Heart right ventricle (tissue), 16 donors: ENCODE measurements at regions of chr1 and their contacts with region 1.

Region 1: DNA sequence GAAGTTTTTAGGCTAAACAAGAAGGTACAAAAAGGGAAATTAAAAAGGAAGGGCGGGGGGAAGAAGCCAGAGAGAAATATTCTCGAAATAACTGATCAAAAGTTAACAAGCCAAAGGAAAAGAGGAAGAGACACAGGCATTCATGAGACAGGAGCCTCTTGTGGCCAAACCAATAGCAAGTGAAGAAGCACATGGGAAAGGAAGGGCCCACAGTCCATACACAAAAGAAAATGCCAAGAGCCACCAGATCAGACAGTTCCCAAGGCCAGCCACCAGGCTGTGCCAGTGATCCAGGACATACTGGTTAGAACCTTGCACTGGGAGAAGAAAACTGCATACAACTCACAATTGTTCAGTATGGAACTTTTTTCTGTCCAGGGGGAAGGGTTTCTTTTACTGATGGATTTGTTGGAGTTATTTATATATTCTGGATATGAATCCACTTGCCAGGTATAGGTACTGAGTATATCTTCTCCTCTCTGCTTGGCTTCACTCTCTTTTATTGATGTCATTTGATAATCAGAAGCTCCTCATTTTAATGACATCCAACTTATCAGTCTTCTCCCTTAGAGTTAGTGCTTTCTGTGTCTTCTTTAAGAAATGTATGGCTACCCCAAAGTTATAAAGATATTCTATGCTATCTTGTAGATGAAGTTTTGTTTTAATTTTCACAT is 76.8 kb downstream of the CD46 start:
- DNase-seq: peak; percentile 73 to 84
- ATAC-seq: peak; percentile 31 to 65 (median 56)
- H3K4me3 ChIP-seq: no peak overlapping the region
- H3K27ac ChIP-seq: peak overlapping the region; percentile 10 to 100 (median 94)
- H3K4me1 ChIP-seq: peaks cover 38 to 98% (median 89%) of the 10 kb centered on the region in 9 donors
- H3K27me3 ChIP-seq: no peaks in the 10 kb centered on the region
- CTCF ChIP-seq: peak; percentile 82 to 96 (median 90)

Region 2: DNA sequence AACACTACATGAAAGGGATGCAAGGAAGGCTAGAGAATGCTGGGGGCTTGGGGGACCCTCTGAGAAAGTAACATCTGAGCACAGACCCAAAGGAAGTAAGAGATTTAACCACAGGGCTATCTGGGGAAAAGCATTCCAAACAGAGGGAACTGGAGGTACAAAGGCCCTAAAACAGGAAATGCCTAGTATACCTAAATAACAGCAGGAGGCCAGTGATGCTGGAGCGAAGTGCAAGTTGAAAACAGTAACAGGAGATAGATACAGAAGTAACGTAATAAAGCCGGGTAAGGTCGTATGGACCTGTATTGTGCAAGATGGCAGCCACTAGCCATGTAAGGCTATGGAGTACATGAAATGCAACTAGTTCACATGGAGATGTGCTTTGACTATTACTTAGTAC is 30.2 kb after region 1 on chr1:
- intact Hi-C with region 1: no loop called
- DNase-seq: no peak
- ATAC-seq: no peak
- H3K4me3 ChIP-seq: no peak overlapping the region
- H3K27ac ChIP-seq: peak overlapping the region in 2 of 10 donors; percentile 2 to 13
- H3K4me1 ChIP-seq: peaks cover 3 to 85% (median 67%) of the 10 kb centered on the region in 9 donors
- H3K27me3 ChIP-seq: no peaks in the 10 kb centered on the region
- CTCF ChIP-seq: no peak

Region 3: GRCh38 chr1:207868774-207869721 is 40.4 kb after region 1 on chr1:
- intact Hi-C with region 1: loop called (anchors 1 to 5 kb)
- DNase-seq: peak; percentile 82 to 87
- ATAC-seq: peak; percentile 18 to 80 (median 66)
- H3K4me3 ChIP-seq: peak overlapping the region; percentile 76 to 97 (median 84)
- H3K27ac ChIP-seq: peak overlapping the region; percentile 93 to 99 (median 96)
- H3K4me1 ChIP-seq: peaks cover 18 to 73% (median 61%) of the 10 kb centered on the region in 9 donors
- H3K27me3 ChIP-seq: no peaks in the 10 kb centered on the region
- CTCF ChIP-seq: peak; percentile 68 to 97 (median 79)

Region 4: DNA sequence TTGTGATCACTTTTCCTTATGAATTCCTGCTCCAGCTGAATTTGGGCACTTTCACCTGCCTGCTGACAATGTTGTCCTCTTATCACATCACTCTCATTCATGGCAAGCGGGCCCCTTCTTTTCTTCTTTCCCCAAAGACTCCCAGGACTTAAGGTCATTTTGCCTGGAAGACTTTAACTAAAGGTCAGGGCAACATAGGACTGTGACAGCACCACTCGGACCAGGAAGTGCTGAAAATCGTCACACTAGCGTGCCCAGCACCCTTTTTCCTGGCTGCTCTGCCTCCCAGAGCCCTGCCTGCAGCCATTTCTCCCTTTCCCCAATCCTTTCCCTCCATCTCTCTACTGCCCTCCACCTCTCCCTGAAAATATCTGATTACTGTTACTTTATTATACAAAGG is 46.9 kb after region 1 on chr1:
- intact Hi-C with region 1: loop called in 1 of 10 experiments (anchors 2 kb)
- DNase-seq: no peak
- ATAC-seq: no peak
- H3K4me3 ChIP-seq: no peak overlapping the region
- H3K27ac ChIP-seq: peak overlapping the region in 1 of 10 donors; percentile 11
- H3K4me1 ChIP-seq: peaks cover 0 to 28% (median 14%) of the 10 kb centered on the region in 9 donors
- H3K27me3 ChIP-seq: no peaks in the 10 kb centered on the region
- CTCF ChIP-seq: no peak

Region 5: GRCh38 chr1:207997486-207998268 is 169.1 kb after region 1 on chr1:
- intact Hi-C with region 1: loop called in 1 of 10 experiments (anchors 5 kb)
- DNase-seq: peak; percentile 64 to 88
- ATAC-seq: peak; percentile 82 to 91 (median 85)
- H3K4me3 ChIP-seq: no peak overlapping the region
- H3K27ac ChIP-seq: no peak overlapping the region
- H3K4me1 ChIP-seq: peaks cover 0 to 8% (median 4%) of the 10 kb centered on the region in 9 donors
- H3K27me3 ChIP-seq: no peaks in the 10 kb centered on the region
- CTCF ChIP-seq: peak; percentile 75 to 93 (median 85)